Panc1 (cell line): ENCODE measurements at regions of chr11 and their contacts with region 1.

Region 1: GRCh38 chr11:27158722-27159679 is 118.4 kb downstream of the BBOX1 start:
- DNase-seq: peak; percentile 59
- ATAC-seq: peak; percentile 94
- H3K4me3 ChIP-seq: no peak overlapping the region
- H3K27ac ChIP-seq: no peak overlapping the region
- H3K4me1 ChIP-seq: no peaks in the 10 kb centered on the region
- H3K27me3 ChIP-seq: no peaks in the 10 kb centered on the region
- CTCF ChIP-seq: peak; percentile 87

Region 2: DNA sequence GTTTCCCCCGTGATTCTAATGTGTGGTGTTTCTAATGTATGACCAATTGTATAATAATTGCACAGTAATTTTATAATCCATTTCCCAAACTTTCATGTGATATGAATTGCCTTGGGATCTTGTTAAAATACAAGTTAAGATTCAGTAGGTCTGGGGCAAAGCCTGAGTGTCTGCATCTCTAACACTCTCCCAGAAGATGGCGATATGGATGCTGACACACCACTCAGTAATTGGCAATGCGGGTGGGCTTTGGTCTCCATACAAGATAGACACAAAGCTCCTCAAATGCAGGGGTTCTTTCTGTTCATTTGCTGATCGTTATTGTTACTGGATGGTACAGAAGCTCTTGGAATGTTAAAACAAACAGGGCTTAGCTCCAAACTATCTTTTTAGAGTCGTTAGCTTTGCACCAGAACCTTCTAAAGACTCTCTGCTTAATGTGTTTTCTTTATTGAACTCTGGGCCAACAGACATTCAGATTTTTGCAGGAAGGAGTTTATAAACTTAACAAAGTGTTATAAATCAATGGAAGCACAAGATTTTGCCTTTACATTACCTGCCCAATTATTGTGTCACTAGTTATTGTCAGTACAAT is 872.4 kb before region 1 on chr11:
- CTCF ChIA-PET with region 1: no interaction called
- POLR2A ChIA-PET with region 1: no interaction called
- in situ Hi-C with region 1: no loop called
- intact Hi-C with region 1: loop called (anchors 5 kb)
- DNase-seq: no peak
- ATAC-seq: 0 out of 2 replicates have a peak, but pooled peaks have one; percentile 69
- H3K4me3 ChIP-seq: no peak overlapping the region
- H3K27ac ChIP-seq: no peak overlapping the region
- H3K4me1 ChIP-seq: no peaks in the 10 kb centered on the region
- H3K27me3 ChIP-seq: no peaks in the 10 kb centered on the region
- CTCF ChIP-seq: peak; percentile 71

Region 3: GRCh38 chr11:26649884-26650283 is 509.1 kb before region 1 on chr11:
- CTCF ChIA-PET with region 1: no interaction called
- POLR2A ChIA-PET with region 1: no interaction called
- in situ Hi-C with region 1: no loop called
- intact Hi-C with region 1: loop called (anchors 2 kb)
- DNase-seq: peak; percentile 36
- ATAC-seq: peak; percentile 97
- H3K4me3 ChIP-seq: no peak overlapping the region
- H3K27ac ChIP-seq: no peak overlapping the region
- H3K4me1 ChIP-seq: no peaks in the 10 kb centered on the region
- H3K27me3 ChIP-seq: 0 out of 2 replicates have a peak, but pooled peaks cover 2% of the 10 kb centered on the region
- CTCF ChIP-seq: peak; percentile 86

Region 4: GRCh38 chr11:26753723-26754504 is 405.1 kb before region 1 on chr11:
- CTCF ChIA-PET with region 1: interaction called, 12 read pairs
- POLR2A ChIA-PET with region 1: no interaction called
- in situ Hi-C with region 1: no loop called
- intact Hi-C with region 1: loop called (anchors 1 kb)
- DNase-seq: peak; percentile 13
- ATAC-seq: peak; percentile 85
- H3K4me3 ChIP-seq: no peak overlapping the region
- H3K27ac ChIP-seq: no peak overlapping the region
- H3K4me1 ChIP-seq: no peaks in the 10 kb centered on the region
- H3K27me3 ChIP-seq: no peaks in the 10 kb centered on the region
- CTCF ChIP-seq: peak; percentile 71

Region 5: GRCh38 chr11:27055118-27055557 is 103.9 kb before region 1 on chr11:
- CTCF ChIA-PET with region 1: no interaction called
- POLR2A ChIA-PET with region 1: no interaction called
- in situ Hi-C with region 1: no loop called
- intact Hi-C with region 1: no loop called
- DNase-seq: no peak
- ATAC-seq: no peak
- H3K4me3 ChIP-seq: no peak overlapping the region
- H3K27ac ChIP-seq: no peak overlapping the region
- H3K4me1 ChIP-seq: no peaks in the 10 kb centered on the region
- H3K27me3 ChIP-seq: no peaks in the 10 kb centered on the region
- CTCF ChIP-seq: no peak

Region 6: DNA sequence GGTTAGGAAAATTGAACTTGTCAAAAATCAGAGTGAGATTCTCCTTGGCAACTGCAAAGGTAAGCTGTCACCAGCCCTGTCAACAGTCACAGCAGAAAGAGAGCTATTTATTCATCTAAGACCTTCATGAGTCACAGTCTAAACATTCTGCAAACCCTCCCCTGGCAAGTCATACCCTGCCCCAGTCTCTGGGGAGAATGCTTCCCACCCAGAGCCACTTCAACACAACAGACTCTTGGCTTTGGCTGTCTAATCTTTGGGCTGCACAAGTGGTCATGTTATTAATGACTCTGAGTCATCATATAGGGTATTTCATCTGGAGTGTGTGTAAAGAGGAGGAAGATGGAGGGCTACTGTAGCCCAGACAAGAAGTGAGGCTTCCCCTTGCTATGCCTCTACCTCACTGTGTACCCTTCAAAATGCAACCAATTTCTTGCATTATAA is 50.6 kb after region 1 on chr11:
- CTCF ChIA-PET with region 1: no interaction called
- POLR2A ChIA-PET with region 1: no interaction called
- in situ Hi-C with region 1: no loop called
- intact Hi-C with region 1: no loop called
- DNase-seq: peak; percentile 69
- ATAC-seq: peak; percentile 90
- H3K4me3 ChIP-seq: no peak overlapping the region
- H3K27ac ChIP-seq: peak overlapping the region; percentile 96
- H3K4me1 ChIP-seq: peaks cover 52% of the 10 kb centered on the region
- H3K27me3 ChIP-seq: no peaks in the 10 kb centered on the region
- CTCF ChIP-seq: no peak

Region 7: GRCh38 chr11:27277843-27278242 is 118.8 kb after region 1 on chr11:
- CTCF ChIA-PET with region 1: no interaction called
- POLR2A ChIA-PET with region 1: no interaction called
- in situ Hi-C with region 1: no loop called
- intact Hi-C with region 1: no loop called
- DNase-seq: no peak
- ATAC-seq: no peak
- H3K4me3 ChIP-seq: no peak overlapping the region
- H3K27ac ChIP-seq: peak overlapping the region; percentile 55; the same call in 1 of the 2 replicates
- H3K4me1 ChIP-seq: peaks cover 13% of the 10 kb centered on the region
- H3K27me3 ChIP-seq: no peaks in the 10 kb centered on the region
- CTCF ChIP-seq: no peak

Region 8: GRCh38 chr11:27362749-27363575 is 204.0 kb after region 1 on chr11 and contains the start of gene CCDC34:
- CTCF ChIA-PET with region 1: interaction called, 12 read pairs
- POLR2A ChIA-PET with region 1: no interaction called
- in situ Hi-C with region 1: no loop called
- intact Hi-C with region 1: no loop called
- DNase-seq: peak; percentile 46
- ATAC-seq: peak; percentile 99
- H3K4me3 ChIP-seq: peak within 1 kb of the TSS; percentile 63 to 79
- H3K27ac ChIP-seq: peak within 1 kb of the TSS; percentile 95
- H3K4me1 ChIP-seq: peaks cover 33% of the 10 kb centered on the region
- H3K27me3 ChIP-seq: no peaks in the 10 kb centered on the region
- CTCF ChIP-seq: no peak
- total RNA-seq, gene CCDC34: 28.3 TPM